ENCODE measurements at regions of chr22 and their contacts with region 1.

Region 1: GRCh38 chr22:42621505-42622002 is 6.9 kb upstream of the POLDIP3 start:
- DNase-seq: peak; percentile 41 to 66 (median 59)
- H3K4me3 ChIP-seq: no peak overlapping the region
- H3K27ac ChIP-seq: no peak overlapping the region
- H3K4me1 ChIP-seq: peaks cover 0 to 14% (median 3%) of the 10 kb centered on the region in 4 experiments
- H3K27me3 ChIP-seq: no peaks in the 10 kb centered on the region

Region 2: DNA sequence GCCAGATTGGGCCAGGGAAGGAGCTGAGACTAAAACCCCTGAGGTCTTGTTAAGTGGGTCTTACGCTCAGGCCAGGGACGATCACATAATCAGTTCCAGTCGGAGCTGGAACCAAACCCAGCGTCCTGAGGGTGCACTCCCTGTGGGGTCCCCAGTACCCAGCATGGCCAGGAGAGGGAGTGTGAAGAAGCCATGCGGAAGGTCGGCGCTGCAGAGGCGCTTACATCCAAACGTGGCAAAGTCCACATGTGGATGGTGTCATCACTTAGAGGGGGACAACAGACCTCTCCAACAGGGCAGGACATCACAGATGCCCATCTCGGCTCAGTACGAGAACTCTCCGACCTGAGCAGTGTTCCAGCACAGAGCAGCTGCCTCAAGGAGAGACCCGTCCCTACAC is 10.5 kb after region 1 on chr22:
- CTCF ChIA-PET with region 1: interaction called, 16 read pairs
- POLR2A ChIA-PET with region 1: interaction called, 3 read pairs
- DNase-seq: no peak
- H3K4me3 ChIP-seq: no peak overlapping the region
- H3K27ac ChIP-seq: no peak overlapping the region
- H3K4me1 ChIP-seq: no peaks in the 10 kb centered on the region
- H3K27me3 ChIP-seq: no peaks in the 10 kb centered on the region

Region 3: DNA sequence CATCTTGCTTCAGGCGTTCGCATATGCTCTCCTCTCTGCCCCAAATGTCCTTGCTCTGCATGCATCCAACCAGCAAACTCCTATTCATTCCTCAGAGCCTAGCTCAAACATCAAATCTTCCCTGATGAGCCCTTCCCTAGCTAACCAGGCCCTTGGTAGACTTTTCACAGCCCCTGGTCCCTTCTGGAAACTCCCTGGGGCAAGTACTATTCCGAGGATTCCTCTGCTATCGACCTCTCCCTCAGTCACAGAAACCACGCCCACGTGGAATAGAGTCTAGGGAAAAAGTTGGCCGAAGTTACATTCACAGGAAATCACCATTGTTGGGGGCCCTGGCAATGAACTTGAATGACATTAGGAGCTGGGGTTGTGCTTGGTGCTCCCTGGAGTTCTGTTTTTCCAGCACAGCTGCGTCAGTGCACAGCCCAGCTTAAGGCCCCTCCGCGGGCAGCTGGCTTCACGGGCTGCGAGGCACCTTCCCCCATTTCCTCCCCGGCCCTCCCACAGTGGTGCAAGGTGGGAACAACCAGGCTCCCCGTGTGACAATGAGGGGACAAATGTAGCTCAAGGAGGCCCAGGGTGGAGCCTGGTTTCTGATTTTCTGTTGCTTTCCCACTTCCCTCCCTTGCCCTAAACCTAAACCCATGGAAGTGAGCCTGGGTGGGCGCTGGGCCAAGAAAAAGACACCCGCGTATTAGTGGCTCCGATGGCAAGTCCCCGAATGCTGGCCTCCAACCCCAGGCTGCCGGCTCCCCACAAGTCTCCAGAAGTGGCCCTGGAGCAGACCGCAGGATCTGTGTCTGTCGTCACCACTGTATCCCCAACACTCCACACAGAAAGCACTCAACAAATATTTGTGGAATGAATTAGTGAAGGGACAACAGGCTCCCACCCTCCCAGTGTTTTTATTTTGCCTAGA is 23.1 kb after region 1 on chr22:
- CTCF ChIA-PET with region 1: interaction called, 38 read pairs
- POLR2A ChIA-PET with region 1: no interaction called
- DNase-seq: peak in 2 of 3 donors; percentile 37 to 42
- H3K4me3 ChIP-seq: peak overlapping the region in 4 of 7 experiments; percentile 0 to 45 (median 26)
- H3K27ac ChIP-seq: peak overlapping the region; percentile 17 to 74
- H3K4me1 ChIP-seq: peaks cover 0 to 72% (median 69%) of the 10 kb centered on the region in 4 experiments
- H3K27me3 ChIP-seq: no peaks in the 10 kb centered on the region

Region 4: GRCh38 chr22:42820066-42820763 is 198.7 kb after region 1 on chr22:
- CTCF ChIA-PET with region 1: interaction called, 40 read pairs
- POLR2A ChIA-PET with region 1: no interaction called
- DNase-seq: peak; percentile 10 to 56 (median 15)
- H3K4me3 ChIP-seq: peak overlapping the region in 2 of 7 experiments; percentile 50 to 54
- H3K27ac ChIP-seq: no peak overlapping the region
- H3K4me1 ChIP-seq: peaks cover 0 to 3% (median 0%) of the 10 kb centered on the region in 4 experiments
- H3K27me3 ChIP-seq: no peaks in the 10 kb centered on the region